GM10248 (cell line): ENCODE measurements at regions of chr7 and their contacts with region 1.

Region 1: GRCh38 chr7:43582503-43583423 is at the start of gene STK17A:
- DNase-seq: peak; percentile 94
- CTCF ChIP-seq: peak; percentile 99

Region 2: GRCh38 chr7:43612599-43613589 is 30.1 kb after region 1 on chr7:
- CTCF ChIA-PET with region 1: interaction called, 39 read pairs
- POLR2A ChIA-PET with region 1: interaction called, 4 read pairs
- DNase-seq: peak; percentile 59
- CTCF ChIP-seq: no peak

Region 3: DNA sequence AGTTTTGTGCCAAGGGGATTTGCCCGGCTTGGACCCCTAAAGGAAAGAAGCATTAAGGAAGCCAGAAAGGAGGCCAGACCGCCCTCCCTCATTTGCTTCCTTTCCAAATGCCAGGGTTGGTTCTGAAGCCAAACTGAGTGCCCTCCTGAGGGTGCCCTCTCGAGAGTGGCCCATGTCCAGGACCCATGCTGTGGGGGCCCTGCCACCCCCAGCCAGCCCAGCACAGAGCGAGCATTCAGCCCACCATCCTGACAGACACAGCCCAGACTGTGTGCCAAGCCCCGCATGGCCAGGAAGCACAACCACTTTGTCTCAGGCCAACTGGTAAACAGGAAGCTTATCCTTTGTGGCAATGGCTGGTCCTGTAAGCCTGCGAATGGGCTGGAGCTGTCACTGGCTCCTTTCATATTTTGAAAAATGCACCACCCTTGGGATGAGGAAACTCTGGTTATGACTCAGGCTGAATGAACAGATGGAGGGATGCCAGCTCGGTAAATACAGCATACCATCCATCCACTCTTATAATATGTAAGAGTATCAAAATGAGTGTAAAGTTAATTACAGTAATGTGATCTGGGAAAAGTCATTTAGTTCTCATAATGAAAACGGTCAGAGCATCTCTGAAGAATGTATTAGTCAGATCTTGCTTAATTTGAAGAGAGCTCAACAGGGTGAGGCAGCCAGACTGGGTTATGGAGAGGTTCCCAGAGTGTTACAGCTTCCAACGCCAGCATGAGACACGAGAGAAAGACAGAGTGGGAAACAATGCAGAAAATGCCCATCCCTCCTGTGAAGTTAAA is 65.1 kb after region 1 on chr7:
- CTCF ChIA-PET with region 1: interaction called, 55 read pairs
- POLR2A ChIA-PET with region 1: interaction called, 9 read pairs
- DNase-seq: peak; percentile 31
- CTCF ChIP-seq: no peak

Region 4: GRCh38 chr7:43700059-43700501 is 117.3 kb after region 1 on chr7:
- CTCF ChIA-PET with region 1: interaction called, 175 read pairs
- POLR2A ChIA-PET with region 1: interaction called, 16 read pairs
- DNase-seq: no peak
- CTCF ChIP-seq: peak; percentile 44

Region 5: GRCh38 chr7:43735802-43736541 is 153.2 kb after region 1 on chr7:
- CTCF ChIA-PET with region 1: interaction called, 39 read pairs
- POLR2A ChIA-PET with region 1: interaction called, 3 read pairs
- DNase-seq: peak; percentile 50
- CTCF ChIP-seq: no peak

Region 6: DNA sequence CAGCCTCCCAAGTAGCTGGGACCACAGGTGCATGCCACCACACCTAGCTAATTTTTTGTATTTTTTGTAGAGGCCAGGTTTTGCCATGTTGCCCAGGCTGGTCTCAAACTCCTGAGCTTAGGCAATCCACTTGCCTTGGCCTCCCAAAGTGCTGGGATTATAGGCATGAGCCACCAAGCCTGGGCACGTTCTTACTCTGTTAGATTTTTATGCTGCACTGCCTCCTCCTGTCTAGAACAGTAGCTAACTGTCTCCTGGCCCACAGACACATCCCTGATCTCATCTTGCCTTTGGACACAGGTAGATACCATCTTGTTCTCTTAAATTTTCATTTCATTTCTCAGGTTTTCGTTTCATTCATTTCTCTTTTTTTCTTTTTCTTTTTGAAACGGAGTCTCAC is 216.8 kb after region 1 on chr7:
- CTCF ChIA-PET with region 1: interaction called, 14 read pairs
- POLR2A ChIA-PET with region 1: no interaction called
- DNase-seq: no peak
- CTCF ChIP-seq: peak; percentile 23